SK-N-SH (cell line): ENCODE measurements at regions of chr17 and their contacts with region 1.

Region 1: GRCh38 chr17:28494445-28495188 is 11.5 kb upstream of the FOXN1 start:
- DNase-seq: peak; percentile 93
- H3K4me3 ChIP-seq: no peak overlapping the region
- H3K27ac ChIP-seq: no peak overlapping the region
- H3K4me1 ChIP-seq: peaks cover 0 to 2% of the 10 kb centered on the region in 2 experiments; a peak in 1 of 4 replicates
- H3K27me3 ChIP-seq: 0 out of 2 replicates have a peak, but pooled peaks cover 7% of the 10 kb centered on the region
- CTCF ChIP-seq: peak; percentile 86
- EP300 ChIP-seq: no peak
- RAD21 ChIP-seq: peak; percentile 93

Region 2: GRCh38 chr17:28484296-28484695 is 10.3 kb before region 1 on chr17:
- CTCF ChIA-PET with region 1: interaction called, 23 read pairs
- POLR2A ChIA-PET with region 1: no interaction called
- DNase-seq: no peak
- H3K4me3 ChIP-seq: no peak overlapping the region
- H3K27ac ChIP-seq: no peak overlapping the region
- H3K4me1 ChIP-seq: no peaks in the 10 kb centered on the region
- H3K27me3 ChIP-seq: peaks cover 19% of the 10 kb centered on the region; the same call in 1 of the 2 replicates
- CTCF ChIP-seq: no peak
- EP300 ChIP-seq: no peak
- RAD21 ChIP-seq: no peak

Region 3: GRCh38 chr17:28521311-28522085 is 26.9 kb after region 1 on chr17:
- CTCF ChIA-PET with region 1: interaction called, 14 read pairs
- POLR2A ChIA-PET with region 1: no interaction called
- DNase-seq: no peak
- H3K4me3 ChIP-seq: no peak overlapping the region
- H3K27ac ChIP-seq: no peak overlapping the region
- H3K4me1 ChIP-seq: peaks cover 0 to 6% of the 10 kb centered on the region in 2 experiments; a peak in 1 of 4 replicates
- H3K27me3 ChIP-seq: no peaks in the 10 kb centered on the region
- CTCF ChIP-seq: no peak
- EP300 ChIP-seq: no peak
- RAD21 ChIP-seq: no peak

Region 4: GRCh38 chr17:28552246-28552999 is 57.8 kb after region 1 on chr17 and contains the start of gene UNC119:
- CTCF ChIA-PET with region 1: interaction called, 87 read pairs
- POLR2A ChIA-PET with region 1: no interaction called
- DNase-seq: peak; percentile 99
- H3K4me3 ChIP-seq: peak within 1 kb of the TSS; percentile 70 to 90
- H3K27ac ChIP-seq: peak within 1 kb of the TSS; percentile 39 to 81
- H3K4me1 ChIP-seq: peaks cover 3 to 33% of the 10 kb centered on the region in 2 experiments; a peak in 2 of 4 replicates
- H3K27me3 ChIP-seq: no peaks in the 10 kb centered on the region
- CTCF ChIP-seq: no peak
- EP300 ChIP-seq: no peak
- RAD21 ChIP-seq: no peak
- polyA plus RNA-seq, gene UNC119: 89.9 and 106 TPM in 2 replicates

Region 5: DNA sequence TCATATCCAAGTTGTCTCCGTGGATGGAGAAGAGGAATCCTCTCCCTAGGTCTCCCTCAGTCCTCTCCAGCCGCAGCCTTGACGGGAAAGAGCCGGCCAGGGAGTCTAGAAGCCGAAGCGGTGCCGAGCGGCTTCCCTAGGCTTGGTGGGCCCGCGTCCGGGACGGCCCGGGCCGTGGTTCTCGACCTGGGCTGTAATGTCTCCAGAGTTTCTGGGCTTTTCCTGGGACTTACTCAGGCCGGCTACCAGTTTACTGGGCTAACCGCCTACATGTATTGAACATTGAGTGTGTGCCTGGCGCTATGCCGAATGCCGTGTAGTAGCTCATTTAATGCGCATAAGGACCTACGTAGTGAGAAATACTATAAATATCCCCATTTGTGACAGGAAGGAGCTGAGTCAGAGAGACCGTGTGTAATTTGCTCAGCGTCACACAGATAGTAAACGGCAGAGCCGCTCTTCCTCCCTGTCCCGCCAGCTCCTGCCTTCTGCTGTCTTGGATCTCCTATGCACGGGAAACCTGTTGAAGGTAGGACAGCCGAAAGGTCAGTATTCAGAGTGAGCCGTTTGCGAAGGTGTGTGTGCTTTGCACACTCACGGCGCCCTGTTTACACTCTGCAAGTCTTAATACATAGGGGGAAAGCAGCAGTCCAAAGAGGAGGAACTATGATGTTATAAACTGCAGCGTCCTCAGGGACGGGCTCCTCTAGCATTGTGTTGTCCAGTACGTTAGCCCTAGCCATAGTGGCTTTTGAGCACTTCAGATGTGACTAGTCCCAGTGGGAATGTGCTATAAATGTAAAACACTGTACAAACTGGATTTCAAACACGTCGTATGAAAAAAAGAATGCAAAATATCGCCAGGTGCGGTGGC is 104.9 kb after region 1 on chr17:
- CTCF ChIA-PET with region 1: no interaction called
- POLR2A ChIA-PET with region 1: no interaction called
- DNase-seq: peak; percentile 40
- H3K4me3 ChIP-seq: peak overlapping the region; percentile 65 to 83
- H3K27ac ChIP-seq: peak overlapping the region; percentile 75 to 94
- H3K4me1 ChIP-seq: peaks cover 6 to 9% of the 10 kb centered on the region in 2 experiments; a peak in 1 of 4 replicates
- H3K27me3 ChIP-seq: no peaks in the 10 kb centered on the region
- CTCF ChIP-seq: no peak
- EP300 ChIP-seq: no peak
- RAD21 ChIP-seq: no peak

Region 6: GRCh38 chr17:28644985-28645939 is 150.6 kb after region 1 on chr17 and contains the start of gene BLTP2:
- CTCF ChIA-PET with region 1: interaction called, 17 read pairs
- POLR2A ChIA-PET with region 1: no interaction called
- DNase-seq: peak; percentile 99
- H3K4me3 ChIP-seq: peak within 1 kb of the TSS; percentile 89 to 95
- H3K27ac ChIP-seq: peak within 1 kb of the TSS; percentile 60 to 85
- H3K4me1 ChIP-seq: peaks cover 6 to 14% of the 10 kb centered on the region in 2 experiments; a peak in 3 of 4 replicates
- H3K27me3 ChIP-seq: no peaks in the 10 kb centered on the region
- CTCF ChIP-seq: no peak
- EP300 ChIP-seq: no peak
- RAD21 ChIP-seq: no peak
- polyA plus RNA-seq, gene BLTP2: 46.4 and 77.8 TPM in 2 replicates